Right ventricle myocardium inferior (tissue), 1 donor: ENCODE measurements at regions of chrX and their contacts with region 1.

Region 1: GRCh38 chrX:9708904-9709553 is 56.6 kb downstream of the GPR143 start:
- DNase-seq: peak; percentile 85
- ATAC-seq: peak; percentile 59

Region 2: GRCh38 chrX:8971116-8971515 is 737.9 kb before region 1 on chrX:
- intact Hi-C with region 1: loop called (anchors 2 kb)
- DNase-seq: no peak
- ATAC-seq: no peak